Activated T-helper 2 cell treated with anti-CD3 and anti-CD28 coated beads, Interferon-gamma antibody, Interleukin-2, Interleukin-4, amounts not matched to agents 10 μg/mL and 5 μg/mL and 100 μg/mL, durations not matched to agents 14 hours and 24 hours and 36 hours (primary cell): ENCODE measurements at regions of chr20 and their contacts with region 1.

Region 1: DNA sequence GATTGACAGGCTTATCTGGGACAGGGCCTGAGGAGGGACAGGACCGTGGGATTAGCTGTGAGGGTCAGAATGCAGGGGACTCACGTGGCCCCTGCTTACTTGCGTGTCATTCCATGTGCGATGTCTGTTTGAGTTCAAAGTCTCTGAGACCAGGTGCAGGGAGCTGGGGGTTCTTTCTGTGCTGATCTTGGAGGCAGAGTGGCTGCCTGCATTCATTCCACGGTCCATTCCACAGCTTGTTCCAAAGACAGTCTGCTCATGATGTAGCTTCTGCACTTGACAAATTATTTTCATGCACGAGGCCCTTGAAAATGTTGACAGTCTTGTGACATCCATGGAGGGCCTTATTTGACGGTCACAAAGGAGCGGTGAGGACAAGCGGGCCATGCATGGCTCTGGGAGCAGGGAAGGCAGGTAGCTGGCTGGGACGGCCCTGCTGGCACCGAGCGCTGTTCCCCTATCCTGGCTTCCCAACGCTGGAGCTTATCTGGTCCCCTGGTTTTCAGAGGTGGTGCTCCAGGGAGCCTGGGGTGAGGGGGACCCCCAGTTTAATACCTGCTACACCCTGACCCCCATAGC is 156.3 kb upstream of the RNF24 start:
- DNase-seq: no peak
- H3K4me3 Mint-ChIP-seq: peak overlapping the region; percentile 73
- H3K27ac Mint-ChIP-seq: peak overlapping the region; percentile 84
- H3K4me1 Mint-ChIP-seq: peaks cover 34% of the 10 kb centered on the region
- H3K27me3 Mint-ChIP-seq: no peaks in the 10 kb centered on the region

Region 2: GRCh38 chr20:3995749-3996320 is 175.8 kb before region 1 on chr20:
- intact Hi-C with region 1: no loop called
- DNase-seq: no peak
- H3K4me3 Mint-ChIP-seq: no peak overlapping the region
- H3K27ac Mint-ChIP-seq: peak overlapping the region; percentile 83
- H3K4me1 Mint-ChIP-seq: peaks cover 54% of the 10 kb centered on the region
- H3K27me3 Mint-ChIP-seq: no peaks in the 10 kb centered on the region

Region 3: DNA sequence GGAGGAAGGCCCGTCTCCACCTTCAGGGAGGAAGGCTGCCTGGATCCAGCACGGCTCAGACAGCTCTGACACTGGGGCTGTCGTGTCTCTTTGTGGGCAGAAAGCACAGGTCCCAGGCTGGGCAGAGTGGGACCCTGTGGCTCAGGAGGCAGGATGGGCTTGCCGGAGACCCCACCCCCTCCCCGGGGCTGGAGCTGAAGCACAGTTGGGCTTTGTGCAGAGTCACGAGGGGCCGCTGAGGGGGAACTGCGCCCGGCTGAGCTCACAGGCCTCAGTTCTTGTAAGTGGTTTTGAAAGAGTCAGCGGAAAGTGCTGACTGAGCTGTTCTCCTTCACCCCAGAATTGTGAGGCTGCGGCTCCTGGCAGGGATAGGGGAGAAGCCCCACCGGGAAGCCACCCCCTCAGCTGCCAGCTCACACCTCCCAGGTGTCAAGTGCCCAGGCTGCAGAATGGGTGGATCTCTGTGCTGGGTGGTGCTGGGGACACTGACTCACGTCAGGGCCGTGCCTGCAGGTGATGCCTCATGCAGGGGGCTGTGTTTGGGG is 10.8 kb before region 1 on chr20:
- intact Hi-C with region 1: loop called (anchors 1 kb)
- DNase-seq: peak; percentile 29
- H3K4me3 Mint-ChIP-seq: peak overlapping the region; percentile 27
- H3K27ac Mint-ChIP-seq: peak overlapping the region; percentile 82
- H3K4me1 Mint-ChIP-seq: peaks cover 54% of the 10 kb centered on the region
- H3K27me3 Mint-ChIP-seq: no peaks in the 10 kb centered on the region